ENCODE measurements at regions of chr1 and their contacts with region 1.

Region 1: DNA sequence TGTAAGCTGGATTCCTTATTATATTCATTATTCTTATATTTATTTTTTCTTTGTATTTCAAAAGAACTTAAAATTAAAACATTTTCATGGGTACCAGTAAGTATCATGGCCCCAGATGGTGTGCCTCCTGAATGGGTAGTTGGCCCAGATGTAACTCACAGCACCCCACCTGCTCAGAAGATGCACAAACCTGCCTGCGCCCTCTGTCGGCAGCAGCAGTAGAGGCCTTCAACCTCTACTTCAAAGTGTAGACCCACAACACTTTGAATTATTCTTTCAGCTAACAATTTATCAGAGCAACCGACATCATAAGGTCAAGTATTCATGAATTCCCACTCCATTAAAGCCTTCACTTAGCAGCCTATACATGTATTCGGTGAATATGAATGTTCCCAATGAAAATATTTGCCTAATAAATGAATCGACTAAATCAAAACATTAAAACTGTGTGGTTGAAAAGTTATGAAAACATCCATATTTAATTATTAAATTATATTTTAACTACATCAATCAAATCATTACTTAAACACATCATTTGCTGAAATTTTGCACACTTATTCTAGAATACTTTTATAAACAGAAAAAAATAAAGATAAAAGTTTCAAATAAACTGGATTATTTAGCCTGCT is 25.4 kb downstream of the PIGM start:
- DNase-seq: peak; percentile 68 to 88 (median 87)
- ATAC-seq: peak; percentile 71 to 72
- H3K4me3 ChIP-seq: no peak overlapping the region
- H3K27ac ChIP-seq: no peak overlapping the region
- H3K4me1 ChIP-seq: no peaks in the 10 kb centered on the region
- H3K27me3 ChIP-seq: no peaks in the 10 kb centered on the region

Region 2: DNA sequence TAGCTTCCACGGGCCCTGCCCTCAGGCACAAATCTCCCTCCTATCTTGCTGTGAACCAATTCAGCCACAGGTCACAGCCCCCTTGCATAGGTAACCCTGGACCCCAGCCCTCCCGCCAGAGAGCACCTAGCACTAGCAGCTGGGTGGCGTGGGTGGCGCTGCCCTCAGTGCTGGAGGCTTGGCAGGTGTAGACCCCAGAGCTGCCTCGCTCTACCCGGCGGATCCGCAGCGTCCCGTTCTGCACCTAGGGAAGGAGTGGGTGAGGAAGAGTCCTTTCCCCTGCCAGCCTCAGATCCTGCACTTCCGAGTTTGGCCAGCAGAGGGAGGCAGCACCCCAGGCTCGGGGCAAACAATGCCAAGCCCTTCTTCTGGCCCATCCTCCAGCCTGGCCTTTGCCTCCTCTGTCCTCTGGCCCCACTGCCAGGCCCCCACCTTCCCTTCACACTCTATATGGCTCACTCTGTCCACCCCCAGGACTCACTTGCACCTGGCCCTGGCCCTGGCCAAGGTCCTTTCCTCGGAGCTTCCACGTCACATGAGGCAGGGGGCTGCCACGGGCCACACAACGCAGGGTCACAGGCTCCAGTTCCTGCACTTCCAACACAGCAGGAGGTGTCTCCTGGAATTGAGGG is 70.0 kb before region 1 on chr1:
- intact Hi-C with region 1: loop called (anchors 2 to 5 kb)
- DNase-seq: peak; percentile 66 to 90 (median 88)
- ATAC-seq: peak; percentile 64
- H3K4me3 ChIP-seq: no peak overlapping the region
- H3K27ac ChIP-seq: no peak overlapping the region
- H3K4me1 ChIP-seq: no peaks in the 10 kb centered on the region
- H3K27me3 ChIP-seq: no peaks in the 10 kb centered on the region